ENCODE measurements at regions of chr15 and their contacts with region 1.

Region 1: GRCh38 chr15:93748710-93749109 is 482.7 kb upstream of the MCTP2 start:
- DNase-seq: no peak
- ATAC-seq: no peak
- H3K4me3 ChIP-seq: no peak overlapping the region
- H3K4me3 Mint-ChIP-seq: no peak overlapping the region
- H3K27ac ChIP-seq: no peak overlapping the region
- H3K27ac Mint-ChIP-seq: no peak overlapping the region
- H3K4me1 ChIP-seq: no peaks in the 10 kb centered on the region
- H3K4me1 Mint-ChIP-seq: no peaks in the 10 kb centered on the region
- H3K27me3 ChIP-seq: peaks cover 2% of the 10 kb centered on the region
- H3K27me3 Mint-ChIP-seq: peaks cover 24 to 53% of the 10 kb centered on the region in 2 donors
- CTCF ChIP-seq: no peak

Region 2: DNA sequence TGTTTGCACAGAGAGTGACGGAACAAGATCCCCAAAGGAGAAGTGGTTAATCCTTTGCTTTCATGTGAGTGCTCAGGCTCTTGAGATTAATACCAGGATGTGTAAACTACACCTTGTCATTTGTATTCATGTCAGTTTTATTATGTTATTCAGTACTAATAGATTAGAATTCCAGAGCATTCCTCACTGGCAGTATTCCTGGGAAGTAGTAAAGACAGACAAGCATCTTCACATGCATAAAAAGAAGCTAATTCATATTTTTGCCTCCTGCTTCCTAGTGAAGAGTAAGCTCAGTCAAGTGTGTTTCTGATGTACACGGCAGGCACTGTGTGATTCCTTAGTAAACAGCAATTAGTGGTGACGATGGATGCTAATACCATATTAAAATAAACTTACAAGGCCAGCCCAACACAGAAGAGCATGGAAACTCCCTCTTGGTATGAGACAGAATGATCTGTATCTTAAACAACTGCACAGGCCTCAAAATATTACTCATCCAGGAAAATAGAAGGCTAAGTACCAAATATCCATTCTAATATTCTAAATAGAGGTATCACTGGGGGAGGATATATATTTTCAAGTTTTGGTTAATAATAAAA is 145.8 kb after region 1 on chr15:
- intact Hi-C with region 1: loop called (anchors 5 kb)
- DNase-seq: no peak
- ATAC-seq: no peak
- H3K4me3 ChIP-seq: no peak overlapping the region
- H3K4me3 Mint-ChIP-seq: no peak overlapping the region
- H3K27ac ChIP-seq: no peak overlapping the region
- H3K27ac Mint-ChIP-seq: no peak overlapping the region
- H3K4me1 ChIP-seq: no peaks in the 10 kb centered on the region
- H3K4me1 Mint-ChIP-seq: no peaks in the 10 kb centered on the region
- H3K27me3 ChIP-seq: peaks cover 2% of the 10 kb centered on the region
- H3K27me3 Mint-ChIP-seq: peaks cover 11 to 20% of the 10 kb centered on the region in 2 donors
- CTCF ChIP-seq: no peak